ENCODE measurements at regions of chr2 and their contacts with region 1.

Region 1: DNA sequence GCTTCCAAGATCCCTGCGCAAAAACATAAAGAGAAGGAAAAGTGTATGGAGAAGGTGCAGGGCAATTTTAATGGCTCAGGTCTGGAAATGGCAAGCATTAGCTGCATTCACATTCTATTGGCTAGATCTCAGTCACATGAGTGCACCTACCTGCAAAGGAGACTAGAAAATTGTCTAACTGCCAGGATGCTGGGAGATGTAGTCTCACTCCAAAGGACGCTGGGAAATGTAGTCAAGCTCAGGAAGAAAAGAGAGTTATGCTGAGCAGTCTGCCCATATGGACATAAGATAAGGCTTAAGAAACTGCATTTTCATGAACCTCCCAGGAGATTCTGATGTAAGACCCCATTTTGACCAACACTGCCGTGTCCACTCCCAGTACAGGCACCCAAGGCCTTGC is 9.5 kb upstream of the KLHL29 start:
- DNase-seq: peak; percentile 55
- H3K4me3 ChIP-seq: no peak overlapping the region
- H3K27ac ChIP-seq: no peak overlapping the region
- H3K4me1 ChIP-seq: no peaks in the 10 kb centered on the region; a peak in 1 of 4 replicates
- H3K27me3 ChIP-seq: no peaks in the 10 kb centered on the region
- CTCF ChIP-seq: no peak
- EP300 ChIP-seq: no peak
- RAD21 ChIP-seq: no peak

Region 2: GRCh38 chr2:23360571-23361125 is 14.8 kb before region 1 on chr2:
- CTCF ChIA-PET with region 1: interaction called, 10 read pairs
- POLR2A ChIA-PET with region 1: no interaction called
- DNase-seq: peak; percentile 37
- H3K4me3 ChIP-seq: no peak overlapping the region
- H3K27ac ChIP-seq: no peak overlapping the region
- H3K4me1 ChIP-seq: peaks cover 0 to 11% of the 10 kb centered on the region in 2 experiments; a peak in 2 of 4 replicates
- H3K27me3 ChIP-seq: no peaks in the 10 kb centered on the region
- CTCF ChIP-seq: no peak; the same call in 1 of the 2 replicates
- EP300 ChIP-seq: no peak
- RAD21 ChIP-seq: no peak; the same call in 1 of the 2 replicates

Region 3: DNA sequence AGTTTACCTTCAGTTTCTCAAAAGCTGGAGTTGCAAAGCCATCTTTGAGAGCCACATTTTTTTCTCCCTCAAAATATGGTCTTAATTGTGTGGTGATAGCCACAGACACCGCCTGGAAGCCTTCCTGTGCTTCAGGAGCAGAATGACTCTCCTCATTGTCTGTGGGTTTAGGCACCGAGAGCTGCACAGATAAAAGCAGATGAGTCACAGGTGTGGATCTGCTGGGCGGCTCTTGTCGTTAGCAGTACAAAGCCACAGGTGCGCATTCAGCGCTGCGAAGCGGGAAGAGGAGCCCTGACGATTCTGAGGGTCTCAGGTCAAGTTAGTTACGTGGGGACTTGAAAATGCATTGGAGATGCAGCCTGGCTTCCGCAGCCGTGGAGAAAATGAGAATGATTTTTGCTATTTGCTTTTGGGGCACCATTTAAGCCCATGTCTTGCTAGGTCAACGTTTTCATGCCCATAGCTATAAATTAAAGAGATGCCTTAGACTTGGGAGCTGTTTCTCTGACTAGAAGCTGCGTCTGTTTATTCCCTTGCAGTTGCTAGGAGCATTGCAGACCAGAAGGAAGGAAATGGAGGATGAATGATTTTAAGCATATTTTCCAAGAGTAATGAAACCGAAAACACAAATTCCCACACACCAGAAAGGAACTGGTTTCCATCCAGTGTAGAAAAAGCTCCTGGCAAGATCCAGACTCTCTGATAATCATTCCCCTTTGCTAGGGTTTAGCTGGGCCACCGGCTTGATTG is 61.1 kb after region 1 on chr2:
- CTCF ChIA-PET with region 1: no interaction called
- POLR2A ChIA-PET with region 1: no interaction called
- DNase-seq: no peak
- H3K4me3 ChIP-seq: no peak overlapping the region
- H3K27ac ChIP-seq: no peak overlapping the region
- H3K4me1 ChIP-seq: peaks cover 0 to 22% of the 10 kb centered on the region in 2 experiments; a peak in 1 of 4 replicates
- H3K27me3 ChIP-seq: no peaks in the 10 kb centered on the region
- CTCF ChIP-seq: no peak
- EP300 ChIP-seq: no peak
- RAD21 ChIP-seq: no peak

Region 4: GRCh38 chr2:23460228-23460627 is 84.8 kb after region 1 on chr2:
- CTCF ChIA-PET with region 1: no interaction called
- POLR2A ChIA-PET with region 1: no interaction called
- DNase-seq: no peak
- H3K4me3 ChIP-seq: no peak overlapping the region; a peak in 1 of 4 replicates
- H3K27ac ChIP-seq: no peak overlapping the region
- H3K4me1 ChIP-seq: peaks cover under 1 to 46% of the 10 kb centered on the region in 2 experiments; a peak in 2 of 4 replicates
- H3K27me3 ChIP-seq: no peaks in the 10 kb centered on the region
- CTCF ChIP-seq: peak; percentile 75
- EP300 ChIP-seq: no peak
- RAD21 ChIP-seq: peak; percentile 64